ENCODE measurements at regions of chr1 and their contacts with region 1.

Region 1: DNA sequence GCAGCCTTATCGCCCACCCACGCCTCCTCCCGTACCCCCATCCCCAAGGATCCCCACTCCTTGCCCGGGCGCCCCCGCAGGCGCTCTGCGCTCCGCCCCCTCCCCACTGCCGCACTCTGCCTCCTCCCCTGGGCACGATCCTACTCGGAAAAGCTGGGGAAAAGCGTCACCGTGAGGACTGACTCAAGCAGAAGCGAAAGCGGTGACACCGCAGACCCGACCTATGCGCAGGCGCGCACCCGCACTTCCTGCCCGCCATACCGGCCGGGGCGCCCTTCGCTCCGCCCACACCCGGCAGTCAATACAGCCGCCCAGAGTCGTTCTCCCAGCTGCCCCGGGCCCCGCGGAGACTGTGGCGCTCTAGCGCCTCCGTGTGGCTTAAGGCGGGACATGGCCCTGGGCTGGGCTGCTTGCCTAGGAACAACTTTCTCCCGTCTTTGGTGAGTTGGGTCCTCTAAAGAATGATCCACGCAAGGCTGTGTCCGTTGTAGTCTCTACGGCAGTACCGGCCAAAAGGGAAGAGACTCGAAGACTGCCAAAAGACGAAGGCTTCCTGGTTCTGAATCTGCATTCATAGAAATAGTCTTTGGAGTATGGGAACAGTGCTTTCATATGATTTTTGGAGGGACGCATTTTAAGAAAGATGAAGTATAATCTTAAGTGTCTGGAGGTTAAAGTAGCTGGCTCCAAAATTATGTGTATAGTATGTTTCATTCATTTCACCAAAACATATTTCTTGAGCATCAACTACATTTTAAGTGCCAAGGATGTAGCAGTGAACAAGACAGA is at the start of gene OMA1:
- DNase-seq: peak; percentile 98
- ATAC-seq: peak; percentile 97
- H3K4me3 ChIP-seq: peak within 1 kb of the TSS; percentile 73
- H3K27ac ChIP-seq: peak within 1 kb of the TSS; percentile 87
- H3K4me1 ChIP-seq: no peaks in the 10 kb centered on the region; the same call in 1 of the 2 replicates
- H3K27me3 ChIP-seq: peaks cover 9% of the 10 kb centered on the region
- CTCF ChIP-seq: peak; percentile 98
- POLR2A ChIP-seq: peak; percentile 88
- RAD21 ChIP-seq: peak; percentile 89
- total RNA-seq, gene OMA1: 5.9 and 11.9 TPM in 2 replicates

Region 2: DNA sequence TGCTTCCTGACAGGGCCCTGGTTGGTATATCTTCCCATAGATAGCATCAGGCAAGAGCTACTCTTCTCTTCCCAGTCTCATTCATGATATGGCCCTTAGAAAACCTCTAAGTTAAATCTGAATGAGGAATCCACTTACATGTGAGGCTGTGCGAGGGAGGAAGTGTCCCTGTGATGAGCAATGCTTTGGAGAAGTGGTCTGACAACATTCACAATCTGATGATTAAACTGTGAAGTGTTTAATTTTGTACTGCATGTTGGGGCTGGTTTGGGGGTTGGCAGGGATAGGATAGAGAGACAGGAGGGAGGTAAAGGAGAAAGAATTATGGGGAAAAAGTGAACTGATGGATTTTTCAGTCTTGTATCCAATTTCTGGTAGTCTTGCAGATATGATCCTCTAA is 701.7 kb before region 1 on chr1:
- CTCF ChIA-PET with region 1: no interaction called
- POLR2A ChIA-PET with region 1: no interaction called
- dilution Hi-C with region 1: no loop called
- in situ Hi-C with region 1: no loop called
- intact Hi-C with region 1: no loop called
- DNase-seq: no peak
- ATAC-seq: no peak
- H3K4me3 ChIP-seq: no peak overlapping the region
- H3K27ac ChIP-seq: no peak overlapping the region
- H3K4me1 ChIP-seq: no peaks in the 10 kb centered on the region
- H3K27me3 ChIP-seq: no peaks in the 10 kb centered on the region
- CTCF ChIP-seq: no peak
- POLR2A ChIP-seq: no peak
- RAD21 ChIP-seq: no peak

Region 3: DNA sequence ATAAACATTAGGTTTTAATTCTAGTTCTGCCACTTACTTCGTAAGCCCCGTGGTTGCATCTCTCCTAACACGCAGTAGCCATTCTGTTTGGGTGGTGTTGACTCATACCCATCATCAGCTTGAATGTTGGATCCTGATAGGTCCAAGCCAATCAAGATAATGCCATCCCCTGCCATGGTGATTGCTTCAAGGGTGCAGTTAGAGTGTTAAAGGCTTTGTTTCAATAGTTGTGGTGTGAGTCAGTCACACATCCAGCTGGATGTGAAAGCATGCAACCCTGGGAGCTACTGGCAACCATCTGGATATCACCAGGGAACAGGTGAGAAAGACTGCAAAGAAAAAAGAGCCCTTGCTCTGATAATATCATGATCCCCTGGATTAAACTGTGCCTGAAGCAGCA is 69.3 kb before region 1 on chr1:
- CTCF ChIA-PET with region 1: no interaction called
- POLR2A ChIA-PET with region 1: interaction called, 12 read pairs
- dilution Hi-C with region 1: no loop called
- in situ Hi-C with region 1: no loop called
- intact Hi-C with region 1: no loop called
- DNase-seq: no peak
- ATAC-seq: no peak
- H3K4me3 ChIP-seq: no peak overlapping the region
- H3K27ac ChIP-seq: no peak overlapping the region
- H3K4me1 ChIP-seq: no peaks in the 10 kb centered on the region
- H3K27me3 ChIP-seq: no peaks in the 10 kb centered on the region
- CTCF ChIP-seq: no peak
- POLR2A ChIP-seq: no peak
- RAD21 ChIP-seq: no peak

Region 4: DNA sequence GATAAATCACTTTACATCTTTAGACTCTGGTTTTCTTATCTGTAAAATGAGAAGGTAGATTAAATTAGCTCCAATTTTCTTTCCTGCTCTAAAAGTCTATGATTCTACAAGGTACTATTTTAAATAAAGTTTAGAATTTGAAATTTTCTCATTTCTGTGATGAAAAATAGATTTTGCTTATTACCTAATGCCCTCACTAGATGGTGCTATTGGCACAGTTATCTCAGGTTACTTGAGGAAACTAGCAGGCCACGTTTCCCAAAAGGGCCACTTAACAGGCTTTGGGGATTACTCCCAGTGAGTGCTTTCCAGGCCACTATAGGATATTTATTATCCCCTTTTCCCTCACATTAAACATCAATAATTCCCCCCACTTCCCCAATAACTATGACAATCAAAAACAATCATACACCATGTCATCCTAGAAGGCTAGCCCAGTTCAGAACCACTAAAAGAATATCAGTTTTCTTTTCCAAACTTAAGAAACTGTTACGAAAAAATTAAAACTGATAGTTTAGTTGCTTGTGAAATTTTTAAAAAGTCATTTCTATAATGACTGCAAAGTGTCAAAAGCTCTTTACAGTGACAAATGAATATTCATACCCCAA is 30.8 kb before region 1 on chr1:
- CTCF ChIA-PET with region 1: interaction called, 5 read pairs
- POLR2A ChIA-PET with region 1: no interaction called
- dilution Hi-C with region 1: no loop called
- in situ Hi-C with region 1: no loop called
- intact Hi-C with region 1: loop called (anchors 1 kb)
- DNase-seq: peak; percentile 85
- ATAC-seq: peak; percentile 79
- H3K4me3 ChIP-seq: no peak overlapping the region
- H3K27ac ChIP-seq: no peak overlapping the region
- H3K4me1 ChIP-seq: no peaks in the 10 kb centered on the region
- H3K27me3 ChIP-seq: no peaks in the 10 kb centered on the region
- CTCF ChIP-seq: peak; percentile 85
- POLR2A ChIP-seq: no peak
- RAD21 ChIP-seq: peak; percentile 86

Region 5: DNA sequence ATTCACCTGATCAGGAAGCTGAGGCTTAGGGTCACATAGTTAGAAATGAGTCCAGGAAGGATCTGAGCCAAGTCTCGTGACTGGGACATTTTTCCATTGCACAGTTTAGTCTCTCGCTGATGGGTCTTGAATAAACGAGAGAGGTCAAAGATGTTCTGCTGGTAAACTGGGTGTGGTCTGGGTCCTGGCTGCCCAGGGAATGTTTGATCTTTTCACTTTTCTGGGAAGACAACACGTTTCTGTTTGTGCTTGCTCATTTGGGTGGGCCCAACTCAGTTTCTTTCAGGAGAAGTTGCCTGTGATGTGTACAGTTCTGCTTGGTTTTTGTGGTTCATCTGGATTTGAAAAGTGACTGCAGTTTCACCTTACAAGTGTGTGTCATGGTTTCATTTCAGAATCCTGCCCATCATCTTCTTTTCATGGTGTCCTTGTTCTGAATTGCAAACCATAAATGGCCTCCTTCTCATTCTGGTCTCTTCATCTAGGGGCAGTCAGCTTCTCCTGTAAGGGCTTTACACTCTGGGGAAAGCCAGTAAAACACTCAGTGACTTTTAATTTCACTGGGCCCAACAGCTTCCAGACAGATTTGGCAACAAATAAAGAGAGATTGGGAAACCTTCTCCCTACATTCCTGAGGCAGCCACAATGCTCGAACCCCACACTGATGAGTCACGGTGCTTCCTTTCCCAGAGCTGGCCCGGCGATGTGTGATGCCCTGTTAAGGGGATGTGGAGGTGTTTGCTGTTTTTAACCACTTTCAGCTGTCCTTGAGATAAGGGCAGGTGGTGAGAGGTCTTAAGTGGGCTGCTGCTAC is 37.6 kb after region 1 on chr1:
- CTCF ChIA-PET with region 1: no interaction called
- POLR2A ChIA-PET with region 1: no interaction called
- dilution Hi-C with region 1: no loop called
- in situ Hi-C with region 1: no loop called
- intact Hi-C with region 1: loop called (anchors 2 kb)
- DNase-seq: peak; percentile 96
- ATAC-seq: peak; percentile 82
- H3K4me3 ChIP-seq: no peak overlapping the region
- H3K27ac ChIP-seq: peak overlapping the region; percentile 98
- H3K4me1 ChIP-seq: peaks cover 22% of the 10 kb centered on the region
- H3K27me3 ChIP-seq: no peaks in the 10 kb centered on the region
- CTCF ChIP-seq: no peak
- POLR2A ChIP-seq: no peak
- RAD21 ChIP-seq: no peak

Region 6: GRCh38 chr1:58618303-58618702 is 71.6 kb after region 1 on chr1:
- CTCF ChIA-PET with region 1: no interaction called
- POLR2A ChIA-PET with region 1: no interaction called
- dilution Hi-C with region 1: no loop called
- in situ Hi-C with region 1: no loop called
- intact Hi-C with region 1: loop called (anchors 5 kb)
- DNase-seq: peak; percentile 99
- ATAC-seq: peak; percentile 99
- H3K4me3 ChIP-seq: no peak overlapping the region
- H3K27ac ChIP-seq: no peak overlapping the region
- H3K4me1 ChIP-seq: peaks cover 4% of the 10 kb centered on the region
- H3K27me3 ChIP-seq: no peaks in the 10 kb centered on the region; the same call in 1 of the 2 replicates
- CTCF ChIP-seq: no peak
- POLR2A ChIP-seq: no peak
- RAD21 ChIP-seq: peak; percentile 18; the same call in 1 of the 2 replicates

Region 7: DNA sequence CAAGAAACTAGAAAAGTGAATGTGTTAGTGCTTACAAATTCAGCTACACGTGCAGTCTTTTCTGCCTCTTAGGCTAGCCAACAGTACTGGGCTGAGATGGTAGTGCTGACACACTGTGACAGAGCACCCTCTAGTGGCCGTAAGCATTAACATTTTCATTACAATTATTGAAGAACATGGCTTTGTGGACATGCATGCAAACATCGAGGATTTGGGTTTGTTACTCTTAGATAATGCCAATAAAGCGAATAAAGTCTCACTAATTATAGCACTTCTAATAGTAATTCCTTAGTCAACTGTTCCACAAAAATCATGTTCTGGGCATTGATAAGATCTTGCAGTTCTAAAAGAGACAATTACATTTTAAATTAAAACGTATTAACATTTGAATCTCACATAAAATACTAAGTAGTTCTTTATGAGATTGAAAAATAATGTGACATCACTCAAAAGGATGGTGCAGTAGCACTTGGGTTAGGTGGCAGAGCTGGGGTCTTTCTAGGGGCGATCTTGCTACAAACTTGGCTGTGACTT is 106.0 kb after region 1 on chr1:
- CTCF ChIA-PET with region 1: interaction called, 18 read pairs
- POLR2A ChIA-PET with region 1: no interaction called
- dilution Hi-C with region 1: no loop called
- in situ Hi-C with region 1: loop called (anchors 10 kb)
- intact Hi-C with region 1: loop called (anchors 1 kb)
- DNase-seq: peak; percentile 84
- ATAC-seq: peak; percentile 94
- H3K4me3 ChIP-seq: no peak overlapping the region
- H3K27ac ChIP-seq: no peak overlapping the region
- H3K4me1 ChIP-seq: no peaks in the 10 kb centered on the region
- H3K27me3 ChIP-seq: no peaks in the 10 kb centered on the region
- CTCF ChIP-seq: peak; percentile 92
- POLR2A ChIP-seq: no peak
- RAD21 ChIP-seq: peak; percentile 94

Measured in IMR-90 (cell line).